ENCODE measurements at regions of chr1 and their contacts with region 1.

Region 1: DNA sequence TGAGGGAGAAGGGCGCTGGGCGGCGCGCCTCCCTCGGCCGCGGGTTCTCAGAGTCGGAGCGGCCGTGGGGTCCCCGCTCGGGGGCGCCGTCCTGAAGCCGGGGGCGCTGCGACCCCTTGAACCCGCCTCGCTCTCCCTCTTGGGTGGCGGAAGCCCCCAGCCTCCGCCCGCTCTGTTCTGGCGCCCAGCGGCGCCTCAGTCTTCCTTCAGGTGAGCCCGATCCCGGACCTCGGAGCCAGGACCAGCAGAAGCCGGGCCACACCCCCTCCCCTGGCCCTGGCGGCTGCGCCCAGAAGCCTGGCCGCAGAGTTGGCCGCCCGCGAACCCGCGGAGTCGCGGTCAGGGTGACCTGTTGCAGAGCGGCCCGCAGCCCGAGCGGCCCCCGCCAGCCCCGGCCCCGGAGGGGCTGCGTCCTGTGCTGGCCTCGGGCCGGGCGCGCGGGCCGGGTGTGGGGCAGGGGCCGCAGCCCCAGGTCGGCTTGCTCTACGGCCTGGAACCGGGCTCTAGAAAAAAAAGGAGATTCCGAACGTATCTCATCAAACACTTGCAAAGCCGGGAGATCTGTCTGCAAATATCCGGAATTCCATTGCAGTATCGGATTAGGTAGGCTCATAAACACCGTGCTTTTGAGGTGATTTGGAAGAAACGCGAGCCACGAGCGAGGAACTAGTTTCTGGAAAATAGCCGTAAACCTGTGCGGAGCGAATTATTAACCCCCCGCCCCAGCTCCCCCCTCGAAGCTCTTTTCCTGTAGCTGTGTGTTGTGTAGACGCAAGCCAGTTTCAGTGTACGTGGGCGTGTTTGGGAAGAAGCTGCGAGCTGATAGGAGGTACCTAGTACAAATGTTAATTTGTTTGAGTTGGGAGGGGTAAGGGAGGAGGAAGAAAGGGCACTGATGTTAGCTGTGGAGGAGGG is 816 bp downstream of the RALGPS2 start:
- DNase-seq: peak; percentile 23 to 85 (median 57)
- ATAC-seq: peak; percentile 84
- H3K4me3 ChIP-seq: peak overlapping the region; percentile 71
- H3K4me3 Mint-ChIP-seq: peak overlapping the region; percentile 93
- H3K27ac ChIP-seq: peak overlapping the region in 1 of 2 donors; percentile 29
- H3K27ac Mint-ChIP-seq: peak overlapping the region; percentile 87
- H3K4me1 ChIP-seq: peaks cover 9% of the 10 kb centered on the region
- H3K4me1 Mint-ChIP-seq: peaks cover 39% of the 10 kb centered on the region
- H3K27me3 ChIP-seq: no peaks in the 10 kb centered on the region
- H3K27me3 Mint-ChIP-seq: no peaks in the 10 kb centered on the region
- CTCF ChIP-seq: no peak

Region 2: GRCh38 chr1:178542560-178543356 is 183.1 kb before region 1 on chr1:
- CTCF ChIA-PET with region 1: no interaction called
- POLR2A ChIA-PET with region 1: interaction called, 3 read pairs
- intact Hi-C with region 1: loop called in 1 of 2 experiments (anchors 10 kb)
- DNase-seq: peak; percentile 59 to 91 (median 84)
- ATAC-seq: peak; percentile 90
- H3K4me3 ChIP-seq: peak overlapping the region; percentile 77
- H3K4me3 Mint-ChIP-seq: peak overlapping the region; percentile 93
- H3K27ac ChIP-seq: no peak overlapping the region
- H3K27ac Mint-ChIP-seq: peak overlapping the region; percentile 39
- H3K4me1 ChIP-seq: peaks cover 16% of the 10 kb centered on the region
- H3K4me1 Mint-ChIP-seq: peaks cover 10% of the 10 kb centered on the region
- H3K27me3 ChIP-seq: no peaks in the 10 kb centered on the region
- H3K27me3 Mint-ChIP-seq: no peaks in the 10 kb centered on the region
- CTCF ChIP-seq: peak; percentile 99

Region 3: GRCh38 chr1:179034720-179035119 is 308.9 kb after region 1 on chr1:
- CTCF ChIA-PET with region 1: no interaction called
- POLR2A ChIA-PET with region 1: no interaction called
- intact Hi-C with region 1: no loop called
- DNase-seq: peak in 1 of 14 experiments; percentile 43
- ATAC-seq: peak; percentile 36
- H3K4me3 ChIP-seq: no peak overlapping the region
- H3K4me3 Mint-ChIP-seq: peak overlapping the region; percentile 0
- H3K27ac ChIP-seq: no peak overlapping the region
- H3K27ac Mint-ChIP-seq: peak overlapping the region; percentile 67
- H3K4me1 ChIP-seq: peaks cover 22% of the 10 kb centered on the region
- H3K4me1 Mint-ChIP-seq: peaks cover 87% of the 10 kb centered on the region
- H3K27me3 ChIP-seq: no peaks in the 10 kb centered on the region
- H3K27me3 Mint-ChIP-seq: no peaks in the 10 kb centered on the region
- CTCF ChIP-seq: no peak